HEK293T (cell line): ENCODE measurements at regions of chr1 and their contacts with region 1.

Region 1: DNA sequence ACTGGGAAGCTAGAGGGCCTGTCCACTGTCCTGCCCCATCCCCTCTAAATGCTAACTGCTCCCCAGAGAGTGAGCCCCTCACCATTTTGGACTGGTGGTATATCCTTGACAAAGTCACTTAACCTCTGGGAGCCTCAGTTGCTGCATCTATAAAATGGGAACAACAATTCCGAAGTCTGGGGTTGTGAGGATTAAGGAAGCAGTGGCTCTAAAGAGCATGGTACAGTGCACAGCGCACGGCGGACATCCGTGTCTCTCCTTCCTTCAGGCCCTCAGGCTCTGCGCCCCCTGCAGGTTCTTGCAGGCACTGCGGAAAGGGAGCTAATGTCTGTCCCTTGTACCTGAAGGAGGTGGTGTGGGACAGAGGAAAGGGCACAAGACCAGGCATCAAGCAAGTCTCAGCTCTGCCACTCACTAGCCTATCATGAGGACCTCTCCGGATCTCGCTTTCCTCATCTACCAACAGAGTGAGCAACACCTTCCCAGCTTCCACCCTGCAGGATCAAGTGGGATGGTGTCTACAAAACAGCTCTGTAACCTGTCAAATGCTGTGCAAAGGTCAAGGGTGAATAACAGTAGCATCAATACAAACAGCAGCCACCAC is 20.1 kb downstream of the ECE1 start:
- DNase-seq: peak; percentile 86

Region 2: DNA sequence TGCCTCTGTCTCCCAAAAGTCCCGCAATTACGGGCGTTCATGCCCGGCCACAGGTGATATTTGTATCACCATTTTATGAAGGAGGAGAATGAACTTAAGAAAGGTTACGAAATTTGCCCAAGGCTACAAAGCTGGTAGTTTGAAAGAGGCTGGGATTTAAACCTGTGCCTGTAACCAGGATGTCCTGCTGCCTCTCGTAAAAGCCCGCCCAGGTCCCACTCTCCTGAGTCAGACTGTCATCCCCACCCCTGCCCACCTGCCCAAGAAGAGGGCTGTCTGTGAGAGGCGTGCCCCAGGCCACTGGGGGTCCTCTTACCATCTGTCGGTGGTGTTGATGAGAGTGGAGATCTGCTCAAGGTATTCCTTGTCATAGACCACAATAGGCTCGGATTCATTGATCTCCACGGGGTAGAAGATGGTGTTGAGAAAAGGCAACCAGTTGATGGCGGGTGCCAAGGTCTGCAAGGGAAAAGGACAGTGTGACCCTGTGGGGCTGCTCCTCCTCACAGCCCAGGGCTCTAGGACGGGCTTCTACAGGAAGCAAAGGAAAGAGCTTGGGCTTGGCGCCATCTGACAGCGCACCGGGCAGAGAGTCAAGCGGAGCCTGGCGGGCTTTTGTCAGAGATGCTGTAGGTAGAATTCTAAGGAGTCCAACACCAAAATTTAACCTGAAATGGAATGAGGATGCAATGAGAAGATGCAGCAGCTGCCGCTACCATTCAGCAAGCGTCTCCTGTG is 23.1 kb before region 1 on chr1:
- CTCF ChIA-PET with region 1: interaction called, 14 read pairs
- POLR2A ChIA-PET with region 1: no interaction called
- DNase-seq: no peak

Region 3: DNA sequence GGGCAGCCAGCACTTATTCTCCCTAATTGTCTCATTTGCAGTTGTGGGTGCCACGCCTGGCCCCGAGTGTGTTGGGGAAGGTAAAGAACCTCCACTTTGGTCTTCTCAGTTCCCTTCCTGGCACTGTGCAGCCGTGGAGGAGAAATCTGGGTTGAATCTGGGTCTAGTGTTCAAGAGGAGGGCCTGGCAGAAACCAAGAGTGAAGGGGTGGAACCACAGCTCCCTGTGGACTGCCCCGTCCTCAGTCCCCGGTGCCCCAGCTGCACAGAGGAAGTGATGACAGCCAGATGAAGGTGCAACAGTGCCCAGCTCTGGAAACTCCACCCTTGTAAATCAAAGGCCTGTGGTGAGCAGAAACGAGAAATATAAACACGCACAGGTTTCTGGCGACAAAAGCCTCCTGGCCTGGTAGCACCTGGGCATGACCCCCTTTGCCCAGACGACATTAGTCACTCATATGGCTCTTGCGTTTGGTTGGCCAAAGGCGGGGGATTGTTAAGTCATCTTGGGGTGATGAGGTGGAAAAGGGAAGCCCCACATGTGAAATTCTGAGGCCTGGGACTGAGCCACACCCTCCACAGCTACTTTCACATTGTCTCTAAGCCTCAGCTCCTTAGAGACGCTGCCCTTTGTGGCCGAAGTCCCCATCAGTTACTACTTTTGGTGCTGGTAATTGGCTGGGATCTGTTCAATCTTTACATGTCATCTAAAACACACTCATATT is 24.2 kb after region 1 on chr1:
- CTCF ChIA-PET with region 1: interaction called, 11 read pairs
- POLR2A ChIA-PET with region 1: no interaction called
- DNase-seq: no peak

Region 4: GRCh38 chr1:21334214-21335087 is 64.3 kb after region 1 on chr1:
- CTCF ChIA-PET with region 1: interaction called, 21 read pairs
- POLR2A ChIA-PET with region 1: no interaction called
- DNase-seq: peak; percentile 71

Region 5: GRCh38 chr1:21384620-21385019 is 114.4 kb after region 1 on chr1:
- CTCF ChIA-PET with region 1: no interaction called
- POLR2A ChIA-PET with region 1: no interaction called
- DNase-seq: no peak